ENCODE measurements at regions of chr7 and their contacts with region 1.

Region 1: DNA sequence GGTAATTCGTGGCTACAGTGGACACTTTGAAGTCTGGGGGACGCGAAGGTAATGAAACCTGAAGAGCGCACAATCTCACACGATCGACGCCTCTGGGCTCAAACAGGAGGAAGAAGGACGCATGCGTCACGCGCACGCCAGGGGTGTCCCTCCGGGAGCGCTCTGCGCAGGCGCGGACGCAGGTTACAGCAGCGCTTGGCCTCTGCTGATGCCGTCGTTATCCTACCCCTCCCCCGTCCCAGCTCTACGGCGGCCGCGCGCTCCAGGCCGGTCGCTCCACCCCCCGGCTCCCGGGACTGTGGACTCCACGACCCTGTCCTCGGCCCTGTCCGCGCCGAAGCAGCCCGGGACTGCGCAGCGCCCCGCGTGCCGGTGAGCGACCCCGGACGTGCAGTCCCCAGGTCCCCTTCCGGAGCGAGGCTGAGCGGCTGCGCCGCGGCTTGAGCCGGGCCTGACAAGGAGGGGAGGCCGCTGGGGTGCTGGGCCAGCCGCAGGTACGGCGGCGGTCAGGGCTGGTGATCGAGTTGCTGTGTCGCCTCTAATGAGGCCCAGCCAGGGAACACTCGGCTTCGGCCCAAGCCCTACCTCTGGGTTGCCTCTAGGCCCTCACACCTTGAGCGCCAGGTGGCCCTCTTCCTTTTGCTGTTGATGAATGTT is at the start of gene TMEM106B:
- DNase-seq: peak; percentile 92 to 99 (median 97)
- ATAC-seq: peak; percentile 87
- H3K4me3 ChIP-seq: peak within 1 kb of the TSS; percentile 72 to 83
- H3K4me3 Mint-ChIP-seq: peak within 1 kb of the TSS; percentile 98
- H3K27ac ChIP-seq: peak within 1 kb of the TSS; percentile 94 to 95
- H3K27ac Mint-ChIP-seq: peak within 1 kb of the TSS; percentile 99
- H3K4me1 ChIP-seq: peaks cover 29% of the 10 kb centered on the region
- H3K4me1 Mint-ChIP-seq: peaks cover 40% of the 10 kb centered on the region
- H3K27me3 ChIP-seq: no peaks in the 10 kb centered on the region
- H3K27me3 Mint-ChIP-seq: no peaks in the 10 kb centered on the region
- CTCF ChIP-seq: peak; percentile 19
- total RNA-seq, gene TMEM106B: 15.0 to 17.3 TPM

Region 2: GRCh38 chr7:10939911-10940703 is 1271.1 kb before region 1 on chr7:
- CTCF ChIA-PET with region 1: no interaction called
- POLR2A ChIA-PET with region 1: no interaction called
- intact Hi-C with region 1: loop called in 1 of 2 experiments (anchors 5 kb)
- DNase-seq: peak; percentile 76 to 96 (median 85)
- ATAC-seq: peak; percentile 85
- H3K4me3 ChIP-seq: peak overlapping the region; percentile 91 to 96
- H3K4me3 Mint-ChIP-seq: no peak overlapping the region
- H3K27ac ChIP-seq: peak overlapping the region; percentile 96
- H3K27ac Mint-ChIP-seq: no peak overlapping the region
- H3K4me1 ChIP-seq: peaks cover 24% of the 10 kb centered on the region
- H3K4me1 Mint-ChIP-seq: peaks cover 41% of the 10 kb centered on the region
- H3K27me3 ChIP-seq: no peaks in the 10 kb centered on the region
- H3K27me3 Mint-ChIP-seq: no peaks in the 10 kb centered on the region
- CTCF ChIP-seq: no peak

Region 3: GRCh38 chr7:12067141-12067831 is 143.9 kb before region 1 on chr7:
- CTCF ChIA-PET with region 1: interaction called, 10 read pairs
- POLR2A ChIA-PET with region 1: no interaction called
- intact Hi-C with region 1: loop called in 1 of 2 experiments (anchors 1 kb)
- DNase-seq: peak; percentile 22 to 76 (median 59)
- ATAC-seq: peak; percentile 61
- H3K4me3 ChIP-seq: no peak overlapping the region
- H3K4me3 Mint-ChIP-seq: no peak overlapping the region
- H3K27ac ChIP-seq: no peak overlapping the region
- H3K27ac Mint-ChIP-seq: no peak overlapping the region
- H3K4me1 ChIP-seq: no peaks in the 10 kb centered on the region
- H3K4me1 Mint-ChIP-seq: no peaks in the 10 kb centered on the region
- H3K27me3 ChIP-seq: no peaks in the 10 kb centered on the region
- H3K27me3 Mint-ChIP-seq: no peaks in the 10 kb centered on the region
- CTCF ChIP-seq: peak; percentile 66

Region 4: GRCh38 chr7:12174931-12175330 is 36.3 kb before region 1 on chr7:
- CTCF ChIA-PET with region 1: interaction called, 4 read pairs
- POLR2A ChIA-PET with region 1: interaction called, 10 read pairs
- intact Hi-C with region 1: loop called in 1 of 2 experiments (anchors 2 kb)
- DNase-seq: no peak
- ATAC-seq: no peak
- H3K4me3 ChIP-seq: no peak overlapping the region
- H3K4me3 Mint-ChIP-seq: no peak overlapping the region
- H3K27ac ChIP-seq: no peak overlapping the region
- H3K27ac Mint-ChIP-seq: no peak overlapping the region
- H3K4me1 ChIP-seq: peaks cover 16% of the 10 kb centered on the region
- H3K4me1 Mint-ChIP-seq: peaks cover 23% of the 10 kb centered on the region
- H3K27me3 ChIP-seq: no peaks in the 10 kb centered on the region
- H3K27me3 Mint-ChIP-seq: no peaks in the 10 kb centered on the region
- CTCF ChIP-seq: no peak

Region 5: DNA sequence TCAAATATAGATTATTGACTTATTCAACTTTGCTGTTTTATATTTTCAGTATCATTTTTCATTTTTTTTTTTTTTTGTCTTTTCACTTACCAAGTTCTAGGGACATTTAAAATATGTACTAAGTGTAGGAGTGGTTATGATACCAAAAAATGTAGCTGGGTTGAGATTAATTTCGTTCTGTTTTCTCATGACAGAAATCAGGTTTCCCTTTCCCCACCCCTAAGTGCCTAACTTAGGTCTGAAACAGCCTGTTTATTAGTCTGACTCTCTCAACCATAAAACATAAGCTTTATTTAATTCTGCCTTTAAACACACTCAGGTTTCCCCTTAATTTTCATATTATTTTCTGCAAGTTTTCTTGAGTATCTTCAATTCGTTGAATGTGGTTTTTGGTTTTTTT is 22.0 kb after region 1 on chr7:
- CTCF ChIA-PET with region 1: interaction called, 6 read pairs
- POLR2A ChIA-PET with region 1: interaction called, 10 read pairs
- intact Hi-C with region 1: no loop called
- DNase-seq: no peak
- ATAC-seq: no peak
- H3K4me3 ChIP-seq: no peak overlapping the region
- H3K4me3 Mint-ChIP-seq: no peak overlapping the region
- H3K27ac ChIP-seq: no peak overlapping the region
- H3K27ac Mint-ChIP-seq: no peak overlapping the region
- H3K4me1 ChIP-seq: no peaks in the 10 kb centered on the region
- H3K4me1 Mint-ChIP-seq: peaks cover 7% of the 10 kb centered on the region
- H3K27me3 ChIP-seq: no peaks in the 10 kb centered on the region
- H3K27me3 Mint-ChIP-seq: no peaks in the 10 kb centered on the region
- CTCF ChIP-seq: no peak

Region 6: DNA sequence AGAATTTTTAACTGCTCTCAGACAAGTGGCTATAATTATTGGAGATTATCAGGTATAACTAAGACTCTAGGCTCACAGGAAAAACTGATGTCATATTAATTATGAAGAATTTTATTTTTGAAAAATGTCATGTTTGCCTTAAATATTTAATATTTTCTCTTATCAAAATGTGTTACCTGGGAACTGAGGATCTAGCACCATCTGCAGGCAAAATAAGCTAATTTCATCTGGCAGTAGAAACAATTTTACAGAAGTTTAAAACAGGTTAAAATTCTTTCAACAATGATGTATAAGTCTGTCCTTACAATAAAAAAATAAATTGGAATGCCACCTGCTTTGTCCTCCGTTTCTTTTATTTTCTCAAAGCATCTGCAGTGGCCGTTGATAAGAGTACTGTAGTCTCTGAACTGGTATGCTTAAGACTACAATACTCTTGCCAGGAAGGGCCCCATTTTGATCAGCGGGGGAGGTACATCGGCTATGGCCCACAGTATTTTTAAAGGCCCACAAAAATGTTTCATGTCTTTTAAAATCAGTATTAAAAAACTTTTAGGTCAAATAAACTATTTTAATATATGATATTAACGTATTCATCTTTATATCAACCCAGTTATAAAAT is 111.2 kb after region 1 on chr7:
- CTCF ChIA-PET with region 1: interaction called, 12 read pairs
- POLR2A ChIA-PET with region 1: interaction called, 6 read pairs
- intact Hi-C with region 1: loop called in 1 of 2 experiments (anchors 1 kb)
- DNase-seq: peak in 3 of 9 experiments; percentile 18 to 58 (median 54)
- ATAC-seq: no peak
- H3K4me3 ChIP-seq: no peak overlapping the region
- H3K4me3 Mint-ChIP-seq: no peak overlapping the region
- H3K27ac ChIP-seq: no peak overlapping the region
- H3K27ac Mint-ChIP-seq: no peak overlapping the region
- H3K4me1 ChIP-seq: no peaks in the 10 kb centered on the region
- H3K4me1 Mint-ChIP-seq: no peaks in the 10 kb centered on the region
- H3K27me3 ChIP-seq: no peaks in the 10 kb centered on the region
- H3K27me3 Mint-ChIP-seq: no peaks in the 10 kb centered on the region
- CTCF ChIP-seq: peak; percentile 93

Region 7: GRCh38 chr7:12337095-12337494 is 125.9 kb after region 1 on chr7:
- CTCF ChIA-PET with region 1: no interaction called
- POLR2A ChIA-PET with region 1: no interaction called
- intact Hi-C with region 1: no loop called
- DNase-seq: no peak
- ATAC-seq: no peak
- H3K4me3 ChIP-seq: no peak overlapping the region
- H3K4me3 Mint-ChIP-seq: no peak overlapping the region
- H3K27ac ChIP-seq: no peak overlapping the region
- H3K27ac Mint-ChIP-seq: no peak overlapping the region
- H3K4me1 ChIP-seq: no peaks in the 10 kb centered on the region
- H3K4me1 Mint-ChIP-seq: no peaks in the 10 kb centered on the region
- H3K27me3 ChIP-seq: no peaks in the 10 kb centered on the region
- H3K27me3 Mint-ChIP-seq: no peaks in the 10 kb centered on the region
- CTCF ChIP-seq: no peak